ENCODE measurements at regions of chr5 and their contacts with region 1.

Region 1: GRCh38 chr5:172849606-172850453 is 15.8 kb downstream of the ERGIC1 start:
- DNase-seq: peak; percentile 58
- ATAC-seq: peak; percentile 89
- H3K4me3 Mint-ChIP-seq: peak overlapping the region; percentile 64
- H3K27ac Mint-ChIP-seq: peak overlapping the region; percentile 88
- H3K4me1 Mint-ChIP-seq: peaks cover 76% of the 10 kb centered on the region
- H3K27me3 Mint-ChIP-seq: no peaks in the 10 kb centered on the region
- CTCF ChIP-seq: no peak

Region 2: DNA sequence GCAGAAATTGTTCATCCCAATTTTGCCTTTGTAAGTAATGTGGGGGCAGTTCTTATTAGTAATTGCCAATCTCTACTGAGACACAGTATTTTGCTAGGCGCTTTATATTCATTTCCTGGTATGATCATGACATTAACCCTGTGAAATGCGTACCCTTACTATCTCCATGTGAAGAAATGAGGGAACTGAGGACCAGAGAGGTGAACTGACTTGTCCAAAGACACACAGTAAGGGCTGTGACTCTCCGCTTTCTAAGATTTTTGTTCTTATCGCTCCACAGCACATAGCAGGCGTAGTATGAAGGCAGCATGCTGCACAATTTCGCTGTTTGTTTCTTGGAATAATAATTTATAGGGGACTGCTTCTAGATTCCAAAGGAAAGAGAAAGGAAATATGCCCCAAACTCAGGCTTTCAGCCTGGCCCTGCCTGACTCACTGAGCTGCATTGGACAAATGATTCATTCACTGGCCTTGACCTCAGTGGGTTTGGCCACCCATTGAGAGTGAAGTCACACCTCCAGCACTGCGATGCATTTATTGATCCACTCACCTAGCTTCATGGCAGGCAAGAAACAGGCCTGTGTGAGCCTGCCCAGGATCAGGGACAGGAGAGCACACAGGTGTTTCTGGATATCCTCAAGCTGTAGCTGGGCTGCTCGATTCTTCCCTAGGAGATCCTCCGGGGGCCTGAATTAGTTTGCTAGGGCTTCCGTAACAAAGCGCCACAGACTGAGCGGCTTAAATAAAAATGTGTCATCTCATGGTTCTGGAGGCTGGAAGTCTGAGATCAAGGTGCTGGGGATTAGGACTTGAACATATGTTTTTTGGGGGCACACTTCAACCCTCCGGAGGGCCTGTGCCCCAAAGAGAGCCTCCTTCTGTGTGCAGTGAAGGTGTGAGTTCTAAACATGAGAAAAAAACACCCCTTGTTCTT is 71.7 kb before region 1 on chr5:
- CTCF ChIA-PET with region 1: interaction called, 3 read pairs
- POLR2A ChIA-PET with region 1: interaction called, 91 read pairs
- intact Hi-C with region 1: loop called (anchors 1 kb)
- DNase-seq: no peak
- ATAC-seq: peak; percentile 6
- H3K4me3 Mint-ChIP-seq: peak overlapping the region; percentile 63
- H3K27ac Mint-ChIP-seq: peak overlapping the region; percentile 97
- H3K4me1 Mint-ChIP-seq: peaks cover 39% of the 10 kb centered on the region
- H3K27me3 Mint-ChIP-seq: no peaks in the 10 kb centered on the region
- CTCF ChIP-seq: no peak

Region 3: DNA sequence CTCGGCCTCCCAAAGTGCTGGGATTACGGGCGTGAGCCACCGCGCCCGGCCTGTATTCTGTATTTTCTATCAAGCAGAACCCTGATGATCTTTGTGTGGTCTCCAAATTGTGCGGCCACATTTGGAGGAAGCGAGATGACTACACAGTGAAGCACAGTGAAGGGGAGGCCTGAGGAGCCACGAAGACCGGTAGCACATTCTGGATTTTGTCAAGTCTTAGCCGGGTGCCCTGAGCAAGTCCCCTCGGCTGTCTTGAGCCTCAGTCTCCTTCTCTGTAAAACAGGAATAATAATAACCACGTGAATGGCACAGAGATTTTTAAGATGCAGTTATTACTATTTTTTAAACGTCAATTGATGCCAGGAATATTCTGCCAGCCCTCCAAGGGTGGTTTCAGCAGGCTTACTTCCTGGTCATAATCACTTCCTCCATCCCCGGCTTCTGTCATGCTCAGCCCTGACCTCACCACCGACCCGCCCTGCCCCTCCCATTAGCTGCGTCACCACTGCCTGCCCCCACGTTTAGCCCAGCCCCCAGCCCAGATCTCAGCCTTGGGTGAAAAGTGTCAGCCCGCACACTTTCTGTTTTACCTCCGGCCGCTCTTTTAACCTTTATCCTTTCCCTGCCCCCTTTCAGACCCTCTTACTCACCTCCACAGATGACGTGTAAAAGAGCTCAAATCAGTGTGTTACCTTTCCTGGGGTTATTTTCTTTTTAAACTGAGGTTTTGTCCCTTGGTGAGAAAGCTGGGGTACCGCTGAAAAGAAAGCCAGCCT is 42.7 kb before region 1 on chr5:
- CTCF ChIA-PET with region 1: no interaction called
- POLR2A ChIA-PET with region 1: interaction called, 15 read pairs
- intact Hi-C with region 1: loop called (anchors 1 kb)
- DNase-seq: peak; percentile 68
- ATAC-seq: peak; percentile 99
- H3K4me3 Mint-ChIP-seq: peak overlapping the region; percentile 82
- H3K27ac Mint-ChIP-seq: peak overlapping the region; percentile 85
- H3K4me1 Mint-ChIP-seq: peaks cover 15% of the 10 kb centered on the region
- H3K27me3 Mint-ChIP-seq: no peaks in the 10 kb centered on the region
- CTCF ChIP-seq: no peak

Region 4: GRCh38 chr5:172833686-172834414 is 16.0 kb before region 1 on chr5 and contains the start of gene ERGIC1:
- CTCF ChIA-PET with region 1: interaction called, 4 read pairs
- POLR2A ChIA-PET with region 1: interaction called, 20 read pairs
- intact Hi-C with region 1: loop called (anchors 1 kb)
- DNase-seq: peak; percentile 79
- ATAC-seq: peak; percentile 78
- H3K4me3 Mint-ChIP-seq: peak within 1 kb of the TSS; percentile 89
- H3K27ac Mint-ChIP-seq: peak within 1 kb of the TSS; percentile 92
- H3K4me1 Mint-ChIP-seq: peaks cover 48% of the 10 kb centered on the region
- H3K27me3 Mint-ChIP-seq: no peaks in the 10 kb centered on the region
- CTCF ChIP-seq: no peak
- total RNA-seq, gene ERGIC1: 69.6 and 72.5 TPM in 2 replicates

Region 5: DNA sequence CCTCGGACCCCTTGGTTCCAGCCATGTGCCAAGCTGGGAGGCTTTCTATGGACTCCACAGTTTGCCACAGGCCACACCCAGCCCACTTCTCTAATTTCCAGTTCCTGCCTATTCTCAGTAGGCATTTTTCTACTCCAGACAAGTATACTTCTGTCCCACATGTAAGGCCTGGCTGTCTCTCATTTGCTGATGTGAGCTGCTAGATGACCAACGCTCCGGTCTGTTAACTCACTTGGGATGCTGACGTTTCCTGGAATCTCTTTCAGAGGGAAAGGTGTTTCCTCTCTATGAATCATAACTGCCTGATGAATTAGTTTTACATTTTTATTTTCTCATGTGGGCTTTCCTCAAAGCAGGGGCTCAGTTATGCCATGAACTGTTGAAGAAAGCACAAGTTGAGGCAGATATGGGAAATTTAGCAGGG is 20.5 kb after region 1 on chr5:
- CTCF ChIA-PET with region 1: no interaction called
- POLR2A ChIA-PET with region 1: interaction called, 3 read pairs
- intact Hi-C with region 1: loop called (anchors 2 kb)
- DNase-seq: no peak
- ATAC-seq: peak; percentile 19
- H3K4me3 Mint-ChIP-seq: no peak overlapping the region
- H3K27ac Mint-ChIP-seq: no peak overlapping the region
- H3K4me1 Mint-ChIP-seq: peaks cover 26% of the 10 kb centered on the region
- H3K27me3 Mint-ChIP-seq: no peaks in the 10 kb centered on the region
- CTCF ChIP-seq: no peak

Region 6: GRCh38 chr5:172910828-172911627 is 61.2 kb after region 1 on chr5:
- CTCF ChIA-PET with region 1: no interaction called
- POLR2A ChIA-PET with region 1: no interaction called
- intact Hi-C with region 1: loop called (anchors 5 kb)
- DNase-seq: peak; percentile 23
- ATAC-seq: peak; percentile 76
- H3K4me3 Mint-ChIP-seq: peak overlapping the region; percentile 25
- H3K27ac Mint-ChIP-seq: peak overlapping the region; percentile 86
- H3K4me1 Mint-ChIP-seq: peaks cover 25% of the 10 kb centered on the region
- H3K27me3 Mint-ChIP-seq: no peaks in the 10 kb centered on the region
- CTCF ChIP-seq: no peak

Region 7: GRCh38 chr5:173099461-173099860 is 249.6 kb after region 1 on chr5:
- CTCF ChIA-PET with region 1: no interaction called
- POLR2A ChIA-PET with region 1: no interaction called
- intact Hi-C with region 1: no loop called
- DNase-seq: no peak
- ATAC-seq: no peak
- H3K4me3 Mint-ChIP-seq: no peak overlapping the region
- H3K27ac Mint-ChIP-seq: peak overlapping the region; percentile 28
- H3K4me1 Mint-ChIP-seq: peaks cover 28% of the 10 kb centered on the region
- H3K27me3 Mint-ChIP-seq: no peaks in the 10 kb centered on the region
- CTCF ChIP-seq: no peak

Measured in activated B cell treated with CpG ODN at 0.5 μM for 24 hours (primary cell).